ENCODE measurements at regions of chr4 and their contacts with region 1.

Region 1: GRCh38 chr4:184649026-184649970 is at the starts of genes CASP3 and PRIMPOL:
- DNase-seq: peak; percentile 90 to 99 (median 96)
- ATAC-seq: peak; percentile 85
- H3K4me3 ChIP-seq: peak within 1 kb of the TSS; percentile 93
- H3K4me3 Mint-ChIP-seq: peak within 1 kb of the TSS; percentile 96
- H3K27ac ChIP-seq: peak within 1 kb of the TSS; percentile 72 to 77
- H3K27ac Mint-ChIP-seq: peak within 1 kb of the TSS; percentile 96
- H3K4me1 ChIP-seq: peaks cover 37% of the 10 kb centered on the region
- H3K4me1 Mint-ChIP-seq: peaks cover 51% of the 10 kb centered on the region
- H3K27me3 ChIP-seq: no peaks in the 10 kb centered on the region
- H3K27me3 Mint-ChIP-seq: no peaks in the 10 kb centered on the region
- CTCF ChIP-seq: peak; percentile 24
- total RNA-seq, gene CASP3: 11.9 to 12.2 TPM
- total RNA-seq, gene PRIMPOL: 4.2 TPM

Region 2: GRCh38 chr4:183504064-183504929 is 1145.0 kb before region 1 on chr4:
- CTCF ChIA-PET with region 1: no interaction called
- POLR2A ChIA-PET with region 1: no interaction called
- intact Hi-C with region 1: loop called in 1 of 2 experiments (anchors 5 kb)
- DNase-seq: peak; percentile 98 to 100 (median 99)
- ATAC-seq: peak; percentile 77
- H3K4me3 ChIP-seq: peak overlapping the region; percentile 90
- H3K4me3 Mint-ChIP-seq: peak overlapping the region; percentile 100
- H3K27ac ChIP-seq: peak overlapping the region; percentile 87 to 94
- H3K27ac Mint-ChIP-seq: peak overlapping the region; percentile 97
- H3K4me1 ChIP-seq: peaks cover 14% of the 10 kb centered on the region
- H3K4me1 Mint-ChIP-seq: peaks cover 46% of the 10 kb centered on the region
- H3K27me3 ChIP-seq: no peaks in the 10 kb centered on the region
- H3K27me3 Mint-ChIP-seq: no peaks in the 10 kb centered on the region
- CTCF ChIP-seq: peak; percentile 8

Region 3: GRCh38 chr4:184538023-184538599 is 111.2 kb before region 1 on chr4:
- CTCF ChIA-PET with region 1: no interaction called
- POLR2A ChIA-PET with region 1: interaction called, 32 read pairs
- intact Hi-C with region 1: loop called (anchors 2 kb)
- DNase-seq: peak; percentile 41 to 87 (median 58)
- ATAC-seq: peak; percentile 41
- H3K4me3 ChIP-seq: peak overlapping the region; percentile 82
- H3K4me3 Mint-ChIP-seq: peak overlapping the region; percentile 96
- H3K27ac ChIP-seq: peak overlapping the region; percentile 87 to 96
- H3K27ac Mint-ChIP-seq: peak overlapping the region; percentile 99
- H3K4me1 ChIP-seq: peaks cover 29% of the 10 kb centered on the region
- H3K4me1 Mint-ChIP-seq: peaks cover 50% of the 10 kb centered on the region
- H3K27me3 ChIP-seq: no peaks in the 10 kb centered on the region
- H3K27me3 Mint-ChIP-seq: no peaks in the 10 kb centered on the region
- CTCF ChIP-seq: peak; percentile 63

Region 4: GRCh38 chr4:184750926-184751584 is 101.8 kb after region 1 on chr4:
- CTCF ChIA-PET with region 1: no interaction called
- POLR2A ChIA-PET with region 1: no interaction called
- intact Hi-C with region 1: no loop called
- DNase-seq: no peak
- ATAC-seq: no peak
- H3K4me3 ChIP-seq: no peak overlapping the region
- H3K4me3 Mint-ChIP-seq: no peak overlapping the region
- H3K27ac ChIP-seq: no peak overlapping the region
- H3K27ac Mint-ChIP-seq: no peak overlapping the region
- H3K4me1 ChIP-seq: peaks cover 9% of the 10 kb centered on the region
- H3K4me1 Mint-ChIP-seq: peaks cover 13% of the 10 kb centered on the region
- H3K27me3 ChIP-seq: no peaks in the 10 kb centered on the region
- H3K27me3 Mint-ChIP-seq: no peaks in the 10 kb centered on the region
- CTCF ChIP-seq: no peak

Region 5: GRCh38 chr4:184762100-184762499 is 112.8 kb after region 1 on chr4:
- CTCF ChIA-PET with region 1: no interaction called
- POLR2A ChIA-PET with region 1: interaction called, 10 read pairs
- intact Hi-C with region 1: no loop called
- DNase-seq: peak in 9 of 14 experiments; percentile 5 to 84 (median 22)
- ATAC-seq: peak; percentile 98
- H3K4me3 ChIP-seq: peak overlapping the region; percentile 21
- H3K4me3 Mint-ChIP-seq: peak overlapping the region; percentile 66
- H3K27ac ChIP-seq: peak overlapping the region; percentile 47 to 50
- H3K27ac Mint-ChIP-seq: peak overlapping the region; percentile 78
- H3K4me1 ChIP-seq: peaks cover 17% of the 10 kb centered on the region
- H3K4me1 Mint-ChIP-seq: peaks cover 33% of the 10 kb centered on the region
- H3K27me3 ChIP-seq: no peaks in the 10 kb centered on the region
- H3K27me3 Mint-ChIP-seq: no peaks in the 10 kb centered on the region
- CTCF ChIP-seq: no peak

Region 6: GRCh38 chr4:184968784-184969201 is 319.5 kb after region 1 on chr4:
- CTCF ChIA-PET with region 1: no interaction called
- POLR2A ChIA-PET with region 1: interaction called, 3 read pairs
- intact Hi-C with region 1: loop called in 1 of 2 experiments (anchors 2 kb)
- DNase-seq: no peak
- ATAC-seq: no peak
- H3K4me3 ChIP-seq: no peak overlapping the region
- H3K4me3 Mint-ChIP-seq: no peak overlapping the region
- H3K27ac ChIP-seq: no peak overlapping the region
- H3K27ac Mint-ChIP-seq: peak overlapping the region; percentile 85
- H3K4me1 ChIP-seq: no peaks in the 10 kb centered on the region
- H3K4me1 Mint-ChIP-seq: peaks cover 9% of the 10 kb centered on the region
- H3K27me3 ChIP-seq: no peaks in the 10 kb centered on the region
- H3K27me3 Mint-ChIP-seq: peaks cover 24% of the 10 kb centered on the region
- CTCF ChIP-seq: no peak

Region 7: DNA sequence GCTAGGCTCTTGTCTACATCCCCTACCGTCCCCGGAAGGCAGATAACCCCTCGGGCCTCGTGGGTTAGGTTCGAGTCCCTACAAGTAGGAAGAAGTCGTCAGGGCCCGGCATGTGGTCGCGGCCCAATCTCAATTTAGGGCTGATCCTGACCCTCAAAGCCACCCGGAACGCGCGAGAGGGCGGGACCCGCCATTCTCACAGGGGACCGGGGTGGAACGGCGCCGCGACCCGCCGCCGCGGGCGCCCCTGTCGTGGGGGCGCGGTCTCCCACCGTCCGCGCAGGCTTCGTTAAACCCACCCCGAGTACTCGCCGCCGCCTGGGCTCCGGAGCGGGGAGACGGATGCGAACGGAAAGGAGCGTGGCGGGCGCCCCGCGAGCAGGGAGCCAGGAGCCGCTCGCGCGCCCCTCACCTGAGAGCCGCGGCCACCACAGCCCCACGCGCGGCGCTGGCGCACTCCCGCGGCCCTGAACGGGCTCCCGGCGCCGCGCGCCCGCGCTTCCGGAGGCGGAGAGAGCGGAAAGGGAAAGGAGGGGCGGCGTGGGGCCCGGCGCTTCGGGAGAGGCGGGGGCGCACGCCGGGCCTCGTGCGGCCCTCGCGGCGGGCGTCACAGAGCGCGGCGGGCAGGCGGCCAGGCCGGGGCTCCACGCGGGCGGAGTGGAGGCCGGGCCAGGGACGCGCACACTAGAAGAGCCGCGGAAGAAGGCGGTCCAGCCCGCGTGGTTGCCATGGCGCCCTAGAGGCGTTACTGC is 554.4 kb after region 1 on chr4 and contains the start of gene CFAP97:
- CTCF ChIA-PET with region 1: no interaction called
- POLR2A ChIA-PET with region 1: no interaction called
- intact Hi-C with region 1: loop called in 1 of 2 experiments (anchors 5 kb)
- DNase-seq: peak; percentile 59 to 96 (median 76)
- ATAC-seq: peak; percentile 79
- H3K4me3 ChIP-seq: peak within 1 kb of the TSS; percentile 76
- H3K4me3 Mint-ChIP-seq: peak within 1 kb of the TSS; percentile 98
- H3K27ac ChIP-seq: peak within 1 kb of the TSS; percentile 89 to 90
- H3K27ac Mint-ChIP-seq: peak within 1 kb of the TSS; percentile 89
- H3K4me1 ChIP-seq: peaks cover 42% of the 10 kb centered on the region
- H3K4me1 Mint-ChIP-seq: peaks cover 60% of the 10 kb centered on the region
- H3K27me3 ChIP-seq: no peaks in the 10 kb centered on the region
- H3K27me3 Mint-ChIP-seq: no peaks in the 10 kb centered on the region
- CTCF ChIP-seq: no peak
- total RNA-seq, gene CFAP97: 24.5 to 26.6 TPM

Region 8: GRCh38 chr4:185471235-185472102 is 822.2 kb after region 1 on chr4 and contains the start of gene CCDC110:
- CTCF ChIA-PET with region 1: no interaction called
- POLR2A ChIA-PET with region 1: no interaction called
- intact Hi-C with region 1: loop called in 1 of 2 experiments (anchors 5 kb)
- DNase-seq: peak; percentile 86 to 98 (median 92)
- ATAC-seq: peak; percentile 92
- H3K4me3 ChIP-seq: peak within 1 kb of the TSS; percentile 73
- H3K4me3 Mint-ChIP-seq: peak within 1 kb of the TSS; percentile 93
- H3K27ac ChIP-seq: peak within 1 kb of the TSS in 1 of 2 donors; percentile 31
- H3K27ac Mint-ChIP-seq: peak within 1 kb of the TSS; percentile 63
- H3K4me1 ChIP-seq: peaks cover 20% of the 10 kb centered on the region
- H3K4me1 Mint-ChIP-seq: peaks cover 18% of the 10 kb centered on the region
- H3K27me3 ChIP-seq: peaks cover 0 to 10% of the 10 kb centered on the region in 2 experiments
- H3K27me3 Mint-ChIP-seq: peaks cover 5% of the 10 kb centered on the region
- CTCF ChIP-seq: peak; percentile 48
- total RNA-seq, gene CCDC110: 0.34 to 0.36 TPM